A673 (cell line): ENCODE measurements at regions of chr2 and their contacts with region 1.

Region 1: GRCh38 chr2:84495539-84496146 is 20.7 kb upstream of the DNAH6 start:
- DNase-seq: peak; percentile 78
- H3K4me3 ChIP-seq: no peak overlapping the region
- H3K27ac ChIP-seq: no peak overlapping the region
- H3K4me1 ChIP-seq: no peaks in the 10 kb centered on the region
- H3K27me3 ChIP-seq: no peaks in the 10 kb centered on the region
- CTCF ChIP-seq: peak; percentile 67

Region 2: DNA sequence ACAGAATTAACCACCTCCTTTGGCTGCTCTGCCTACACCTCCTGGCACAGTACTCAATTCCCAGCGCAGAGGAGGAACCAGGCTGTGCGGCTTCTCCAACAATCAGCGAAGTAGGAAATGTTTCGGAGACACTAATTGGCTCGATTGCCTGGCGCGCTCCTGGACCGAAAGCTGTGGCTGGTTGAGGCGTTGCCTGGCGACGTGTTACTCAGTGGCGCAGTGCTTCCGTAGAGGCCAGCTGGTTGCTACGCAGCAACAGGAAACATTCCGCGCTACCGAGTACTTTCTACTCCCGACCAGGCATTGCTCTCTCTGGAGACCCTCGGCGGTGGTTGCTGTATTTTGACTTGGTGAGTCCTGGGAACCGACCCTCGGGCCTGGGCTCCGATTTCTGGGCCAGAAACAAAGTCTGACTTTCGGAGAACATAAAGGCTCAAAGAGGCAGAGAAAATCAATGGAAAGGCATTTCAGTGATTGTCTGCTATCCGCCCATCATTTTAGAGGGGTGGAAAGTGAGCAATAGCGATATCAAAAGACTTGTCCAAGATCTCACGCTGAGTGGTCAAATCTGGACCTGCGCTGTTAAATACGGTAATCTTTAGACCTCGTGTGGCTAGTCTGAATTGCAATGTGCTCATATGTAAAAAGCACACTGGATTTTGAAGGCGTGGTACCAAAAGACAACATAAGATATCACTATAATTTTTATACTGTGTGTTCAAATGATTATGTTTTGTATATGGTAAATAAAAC is 20.8 kb after region 1 on chr2 and contains the start of gene DNAH6:
- CTCF ChIA-PET with region 1: no interaction called
- POLR2A ChIA-PET with region 1: no interaction called
- intact Hi-C with region 1: no loop called
- DNase-seq: peak; percentile 94
- H3K4me3 ChIP-seq: peak within 1 kb of the TSS; percentile 39
- H3K27ac ChIP-seq: no peak within 1 kb of the TSS
- H3K4me1 ChIP-seq: peaks cover 3% of the 10 kb centered on the region
- H3K27me3 ChIP-seq: peaks cover 14% of the 10 kb centered on the region
- CTCF ChIP-seq: no peak
- total RNA-seq, gene DNAH6: not detected in 2 replicates

Region 3: GRCh38 chr2:84631047-84631446 is 135.4 kb after region 1 on chr2:
- CTCF ChIA-PET with region 1: no interaction called
- POLR2A ChIA-PET with region 1: no interaction called
- intact Hi-C with region 1: loop called (anchors 1 kb)
- DNase-seq: peak; percentile 38
- H3K4me3 ChIP-seq: no peak overlapping the region
- H3K27ac ChIP-seq: no peak overlapping the region
- H3K4me1 ChIP-seq: no peaks in the 10 kb centered on the region
- H3K27me3 ChIP-seq: peaks cover 12% of the 10 kb centered on the region
- CTCF ChIP-seq: peak; percentile 57

Region 4: GRCh38 chr2:84856787-84857186 is 361.1 kb after region 1 on chr2:
- CTCF ChIA-PET with region 1: no interaction called
- POLR2A ChIA-PET with region 1: no interaction called
- intact Hi-C with region 1: loop called (anchors 5 kb)
- DNase-seq: no peak
- H3K4me3 ChIP-seq: no peak overlapping the region
- H3K27ac ChIP-seq: no peak overlapping the region
- H3K4me1 ChIP-seq: no peaks in the 10 kb centered on the region
- H3K27me3 ChIP-seq: peaks cover 5% of the 10 kb centered on the region
- CTCF ChIP-seq: no peak

Region 5: DNA sequence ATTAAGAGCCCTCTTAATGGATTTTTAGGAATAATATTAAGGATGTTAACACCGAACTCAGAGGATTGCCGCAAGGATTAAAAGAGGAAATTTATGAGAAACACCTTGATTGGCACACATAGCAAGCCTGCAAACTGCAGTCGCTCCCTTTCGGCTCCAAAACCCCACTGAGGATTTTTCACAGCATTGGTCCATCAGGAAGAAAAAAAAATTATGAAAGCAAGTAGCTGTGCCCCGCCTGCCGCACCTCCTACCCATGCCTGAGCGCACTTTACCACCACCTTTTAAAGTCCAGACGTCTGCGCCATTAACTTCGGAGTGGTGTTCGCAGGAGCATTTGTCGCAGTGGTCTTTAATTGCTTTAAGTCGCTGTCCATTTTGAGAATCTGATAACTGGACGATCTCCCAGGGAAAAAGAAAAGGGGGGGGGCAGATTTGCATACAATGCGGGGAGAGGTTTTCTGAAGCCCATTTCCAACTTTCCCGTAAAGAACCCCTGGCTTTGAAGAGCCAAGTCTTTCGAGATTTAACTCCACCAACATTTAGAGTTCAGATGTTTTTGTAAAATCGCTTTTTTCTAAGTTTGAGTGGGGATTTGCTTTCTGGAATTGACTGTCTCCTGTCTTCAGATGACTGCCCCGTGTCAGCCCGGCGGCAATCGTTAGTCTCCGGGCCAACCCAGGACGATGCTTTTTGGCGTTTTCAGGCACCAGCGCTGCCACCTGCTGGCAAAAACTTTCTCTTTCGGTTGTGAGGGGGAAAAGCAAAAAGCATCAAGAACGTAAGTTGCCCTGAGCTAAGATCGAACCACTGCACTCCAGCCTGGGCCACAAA is 386.2 kb after region 1 on chr2:
- CTCF ChIA-PET with region 1: interaction called, 5 read pairs
- POLR2A ChIA-PET with region 1: no interaction called
- intact Hi-C with region 1: loop called (anchors 5 kb)
- DNase-seq: peak; percentile 91
- H3K4me3 ChIP-seq: peak overlapping the region; percentile 39
- H3K27ac ChIP-seq: no peak overlapping the region
- H3K4me1 ChIP-seq: peaks cover 18% of the 10 kb centered on the region
- H3K27me3 ChIP-seq: peaks cover 65% of the 10 kb centered on the region
- CTCF ChIP-seq: peak; percentile 88